ENCODE measurements at regions of chr20 and their contacts with region 1.

Region 1: GRCh38 chr20:47654370-47654769 is 130.9 kb downstream of the SULF2 start:
- DNase-seq: no peak
- ATAC-seq: no peak
- H3K4me3 ChIP-seq: no peak overlapping the region
- H3K4me3 Mint-ChIP-seq: no peak overlapping the region
- H3K27ac ChIP-seq: no peak overlapping the region
- H3K27ac Mint-ChIP-seq: no peak overlapping the region
- H3K4me1 ChIP-seq: no peaks in the 10 kb centered on the region
- H3K4me1 Mint-ChIP-seq: peaks cover 4% of the 10 kb centered on the region
- H3K27me3 ChIP-seq: no peaks in the 10 kb centered on the region
- H3K27me3 Mint-ChIP-seq: no peaks in the 10 kb centered on the region
- CTCF ChIP-seq: no peak

Region 2: GRCh38 chr20:47631078-47631477 is 23.3 kb before region 1 on chr20:
- CTCF ChIA-PET with region 1: no interaction called
- POLR2A ChIA-PET with region 1: no interaction called
- intact Hi-C with region 1: loop called (anchors 1 kb)
- DNase-seq: no peak
- ATAC-seq: no peak
- H3K4me3 ChIP-seq: no peak overlapping the region
- H3K4me3 Mint-ChIP-seq: no peak overlapping the region
- H3K27ac ChIP-seq: peak overlapping the region in 1 of 2 donors; percentile 16
- H3K27ac Mint-ChIP-seq: peak overlapping the region; percentile 13
- H3K4me1 ChIP-seq: no peaks in the 10 kb centered on the region
- H3K4me1 Mint-ChIP-seq: no peaks in the 10 kb centered on the region
- H3K27me3 ChIP-seq: no peaks in the 10 kb centered on the region
- H3K27me3 Mint-ChIP-seq: no peaks in the 10 kb centered on the region
- CTCF ChIP-seq: no peak

Region 3: GRCh38 chr20:47767972-47768794 is 113.8 kb after region 1 on chr20:
- CTCF ChIA-PET with region 1: no interaction called
- POLR2A ChIA-PET with region 1: no interaction called
- intact Hi-C with region 1: no loop called
- DNase-seq: no peak
- ATAC-seq: no peak
- H3K4me3 ChIP-seq: no peak overlapping the region
- H3K4me3 Mint-ChIP-seq: no peak overlapping the region
- H3K27ac ChIP-seq: no peak overlapping the region
- H3K27ac Mint-ChIP-seq: no peak overlapping the region
- H3K4me1 ChIP-seq: no peaks in the 10 kb centered on the region
- H3K4me1 Mint-ChIP-seq: no peaks in the 10 kb centered on the region
- H3K27me3 ChIP-seq: peaks cover 0 to 2% (median 0%) of the 10 kb centered on the region in 4 experiments
- H3K27me3 Mint-ChIP-seq: peaks cover 20% of the 10 kb centered on the region
- CTCF ChIP-seq: no peak